ENCODE measurements at regions of chr4 and their contacts with region 1.

Region 1: DNA sequence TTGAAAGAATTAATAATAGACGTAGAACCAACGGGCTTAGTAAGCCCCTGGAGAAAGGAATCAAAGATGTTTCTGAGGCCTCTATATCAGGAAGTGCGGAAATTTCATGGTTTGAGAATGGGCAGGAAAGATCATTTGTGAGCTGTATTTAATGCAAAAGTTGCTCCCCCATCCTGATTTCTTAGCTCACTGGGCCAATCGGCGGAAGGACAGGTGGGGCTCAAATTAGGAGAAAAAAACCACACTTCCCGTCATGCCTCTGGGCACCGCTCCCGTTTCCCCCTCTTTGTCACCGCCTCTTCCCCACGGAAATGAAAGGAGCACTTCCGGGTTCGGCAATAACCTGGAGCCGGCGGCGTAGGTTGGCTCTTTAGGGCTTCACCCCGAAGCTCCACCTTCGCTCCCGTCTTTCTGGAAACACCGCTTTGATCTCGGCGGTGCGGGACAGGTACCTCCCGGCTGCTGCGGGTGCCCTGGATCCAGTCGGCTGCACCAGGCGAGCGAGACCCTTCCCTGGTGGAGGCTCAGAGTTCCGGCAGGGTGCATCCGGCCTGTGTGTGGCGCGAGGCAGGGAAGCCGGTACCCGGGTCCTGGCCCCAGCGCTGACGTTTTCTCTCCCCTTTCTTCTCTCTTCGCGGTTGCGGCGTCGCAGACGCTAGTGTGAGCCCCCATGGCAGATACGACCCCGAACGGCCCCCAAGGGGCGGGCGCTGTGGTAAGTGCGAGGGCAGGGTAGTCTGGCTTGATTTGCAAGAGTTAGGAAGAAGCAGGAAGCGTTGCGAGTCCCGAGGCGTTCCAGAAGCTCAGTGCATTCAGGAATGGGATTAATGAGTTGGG is at the start of gene TMEM33:
- DNase-seq: peak; percentile 85 to 89 (median 86)
- H3K4me3 ChIP-seq: peak within 1 kb of the TSS; percentile 55 to 88 (median 79)
- H3K4me3 Mint-ChIP-seq: peak within 1 kb of the TSS; percentile 96 to 99
- H3K27ac ChIP-seq: peak within 1 kb of the TSS; percentile 94 to 96
- H3K27ac Mint-ChIP-seq: peak within 1 kb of the TSS; percentile 98 to 100 (median 100)
- H3K4me1 ChIP-seq: peaks cover 42 to 61% of the 10 kb centered on the region in 2 donors
- H3K4me1 Mint-ChIP-seq: peaks cover 64% of the 10 kb centered on the region
- H3K27me3 ChIP-seq: no peaks in the 10 kb centered on the region
- H3K27me3 Mint-ChIP-seq: peaks cover 0 to 4% (median 2%) of the 10 kb centered on the region in 3 donors
- CTCF ChIP-seq: no peak
- polyA plus RNA-seq, gene TMEM33: 21.7 to 61.6 (median 60.7) TPM

Region 2: DNA sequence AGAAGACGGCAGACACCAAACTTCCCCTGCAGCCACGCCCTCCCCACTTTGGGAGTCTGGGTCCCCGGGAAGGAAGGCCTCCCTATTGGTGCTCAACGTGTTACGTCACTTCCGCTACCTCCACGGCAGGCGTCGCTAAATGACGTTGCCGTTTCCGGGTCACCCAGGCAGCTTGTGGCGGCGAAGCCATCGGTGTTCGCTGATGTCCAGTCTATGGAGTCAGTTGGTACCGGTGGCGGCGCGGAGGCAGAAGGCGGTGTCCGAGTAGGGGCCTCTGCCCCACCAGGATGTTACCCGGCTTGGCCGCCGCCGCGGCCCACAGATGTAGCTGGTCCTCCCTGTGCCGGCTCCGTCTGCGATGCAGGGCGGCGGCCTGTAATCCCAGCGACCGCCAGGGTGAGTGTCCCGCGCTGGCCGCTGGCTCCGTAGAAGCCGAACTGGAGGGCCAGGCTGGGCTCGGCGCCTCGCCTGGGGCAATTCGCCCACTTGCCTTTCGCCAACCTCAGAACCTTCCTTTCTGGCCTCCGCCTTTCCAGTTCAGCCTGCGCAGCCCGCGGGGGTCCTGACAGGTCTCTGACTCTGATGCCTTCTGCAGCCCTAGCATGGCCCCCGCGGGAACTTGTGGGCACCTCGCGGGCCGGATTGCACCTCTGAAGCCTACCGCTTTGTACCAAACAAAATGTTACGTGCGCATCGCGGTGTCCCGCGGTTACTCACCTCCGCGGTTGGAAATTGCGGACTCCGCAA is 55.5 kb after region 1 on chr4 and contains the start of gene SLC30A9:
- intact Hi-C with region 1: loop called (anchors 5 to 10 kb)
- DNase-seq: peak; percentile 96 to 98 (median 97)
- H3K4me3 ChIP-seq: peak within 1 kb of the TSS; percentile 58 to 93 (median 85)
- H3K4me3 Mint-ChIP-seq: peak within 1 kb of the TSS; percentile 82 to 94
- H3K27ac ChIP-seq: peak within 1 kb of the TSS; percentile 74 to 90
- H3K27ac Mint-ChIP-seq: peak within 1 kb of the TSS; percentile 90 to 99 (median 94)
- H3K4me1 ChIP-seq: peaks cover 16 to 17% of the 10 kb centered on the region in 2 donors
- H3K4me1 Mint-ChIP-seq: peaks cover 22% of the 10 kb centered on the region
- H3K27me3 ChIP-seq: no peaks in the 10 kb centered on the region
- H3K27me3 Mint-ChIP-seq: no peaks in the 10 kb centered on the region
- CTCF ChIP-seq: peak; percentile 41
- polyA plus RNA-seq, gene SLC30A9: 11.6 to 47.2 (median 41.0) TPM

Region 3: DNA sequence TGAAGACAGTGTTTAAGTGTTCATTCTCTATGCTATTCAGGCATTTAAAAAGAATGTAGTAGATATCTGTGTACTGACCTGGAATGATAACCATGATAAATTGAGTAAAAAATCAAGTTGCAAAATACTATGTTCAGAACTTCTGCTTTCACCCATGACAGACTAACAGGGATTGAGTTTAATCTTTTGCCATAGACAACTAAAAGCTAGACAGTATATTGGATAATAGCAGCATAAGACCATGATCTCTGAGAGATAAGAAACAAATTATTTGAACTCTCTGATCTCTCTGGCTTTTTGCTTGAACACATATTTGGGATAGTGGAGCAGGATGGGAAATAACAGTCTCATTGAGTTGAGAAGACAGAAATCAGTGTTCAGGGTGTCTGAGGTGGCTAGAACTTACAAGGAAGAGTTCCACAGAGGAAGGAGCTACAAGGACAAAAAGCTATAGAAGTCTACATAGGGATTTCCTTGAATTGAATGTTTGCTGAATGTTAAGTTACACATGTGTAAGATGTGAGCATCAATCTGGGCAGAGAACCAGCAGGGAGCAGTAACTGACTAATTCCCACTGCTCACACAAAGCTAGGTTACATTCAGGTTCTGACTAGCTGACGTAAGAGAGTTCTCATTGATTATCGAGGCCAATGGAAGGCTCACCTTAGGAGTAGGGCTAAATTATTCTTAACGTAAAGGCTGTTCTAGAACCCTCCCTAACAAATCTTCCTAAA is 115.7 kb after region 1 on chr4:
- intact Hi-C with region 1: no loop called
- DNase-seq: no peak
- H3K4me3 ChIP-seq: no peak overlapping the region
- H3K4me3 Mint-ChIP-seq: no peak overlapping the region
- H3K27ac ChIP-seq: no peak overlapping the region
- H3K27ac Mint-ChIP-seq: no peak overlapping the region
- H3K4me1 ChIP-seq: no peaks in the 10 kb centered on the region
- H3K4me1 Mint-ChIP-seq: no peaks in the 10 kb centered on the region
- H3K27me3 ChIP-seq: no peaks in the 10 kb centered on the region
- H3K27me3 Mint-ChIP-seq: no peaks in the 10 kb centered on the region
- CTCF ChIP-seq: no peak

Region 4: GRCh38 chr4:42150653-42151567 is 215.9 kb after region 1 on chr4:
- intact Hi-C with region 1: no loop called
- DNase-seq: peak in 2 of 3 donors; percentile 13 to 15
- H3K4me3 ChIP-seq: peak overlapping the region; percentile 26 to 76 (median 49)
- H3K4me3 Mint-ChIP-seq: peak overlapping the region; percentile 84 to 99
- H3K27ac ChIP-seq: no peak overlapping the region
- H3K27ac Mint-ChIP-seq: peak overlapping the region in 1 of 7 donors; percentile 15
- H3K4me1 ChIP-seq: peaks cover 16 to 24% of the 10 kb centered on the region in 2 donors
- H3K4me1 Mint-ChIP-seq: peaks cover 22% of the 10 kb centered on the region
- H3K27me3 ChIP-seq: peaks cover 23 to 41% of the 10 kb centered on the region in 2 donors
- H3K27me3 Mint-ChIP-seq: peaks cover 36 to 51% (median 40%) of the 10 kb centered on the region in 3 donors
- CTCF ChIP-seq: no peak

Region 5: GRCh38 chr4:42656944-42657792 is 722.1 kb after region 1 on chr4 and contains the start of gene ATP8A1:
- intact Hi-C with region 1: loop called in 1 of 2 experiments (anchors 10 kb)
- DNase-seq: peak; percentile 78 to 80 (median 80)
- H3K4me3 ChIP-seq: peak within 1 kb of the TSS; percentile 88 to 96 (median 94)
- H3K4me3 Mint-ChIP-seq: peak within 1 kb of the TSS; percentile 98
- H3K27ac ChIP-seq: peak within 1 kb of the TSS; percentile 94 to 98
- H3K27ac Mint-ChIP-seq: peak within 1 kb of the TSS; percentile 96 to 100 (median 100)
- H3K4me1 ChIP-seq: peaks cover 24 to 29% of the 10 kb centered on the region in 2 donors
- H3K4me1 Mint-ChIP-seq: peaks cover 36% of the 10 kb centered on the region
- H3K27me3 ChIP-seq: no peaks in the 10 kb centered on the region
- H3K27me3 Mint-ChIP-seq: peaks cover 0 to 1% (median 0%) of the 10 kb centered on the region in 3 donors
- CTCF ChIP-seq: no peak
- polyA plus RNA-seq, gene ATP8A1: 2.2 to 10.8 (median 3.2) TPM

Measured in CD14-positive monocyte (primary cell).